A673 (cell line): ENCODE measurements at regions of chr14 and their contacts with region 1.

Region 1: GRCh38 chr14:49173765-49174373 is 412.3 kb downstream of the RPS29 start:
- DNase-seq: peak; percentile 86
- H3K4me3 ChIP-seq: no peak overlapping the region
- H3K27ac ChIP-seq: no peak overlapping the region
- H3K4me1 ChIP-seq: no peaks in the 10 kb centered on the region
- H3K27me3 ChIP-seq: peaks cover 9% of the 10 kb centered on the region
- CTCF ChIP-seq: peak; percentile 83

Region 2: DNA sequence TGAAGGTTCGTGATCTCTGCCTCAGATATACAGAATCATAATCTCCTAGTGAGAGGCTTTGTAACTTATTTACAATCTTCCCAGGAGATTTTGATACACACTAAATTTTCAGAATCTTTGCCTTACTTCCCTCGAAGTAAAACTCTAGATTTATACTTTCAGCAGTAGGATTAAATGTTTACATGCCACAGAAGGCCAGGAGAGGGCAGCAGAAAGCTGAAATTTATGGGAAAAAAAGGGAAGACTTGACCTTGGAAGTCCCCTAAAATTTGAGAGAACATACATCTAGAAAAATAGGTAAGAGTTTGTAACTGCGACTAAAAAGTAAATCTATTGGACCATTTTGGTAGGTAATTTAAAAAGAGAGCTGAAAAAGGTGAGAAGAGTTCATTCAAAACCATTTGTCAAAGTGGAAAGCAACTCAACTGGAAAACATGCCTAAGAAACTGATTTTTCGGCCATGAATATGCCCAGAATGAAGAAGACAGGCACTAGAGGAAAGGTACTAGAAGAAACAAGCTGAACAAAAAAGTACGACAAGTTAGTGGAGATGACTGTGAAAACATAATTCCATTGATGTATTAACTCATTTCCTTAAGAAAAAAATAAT is 1256.4 kb before region 1 on chr14:
- CTCF ChIA-PET with region 1: no interaction called
- POLR2A ChIA-PET with region 1: no interaction called
- intact Hi-C with region 1: loop called (anchors 2 kb)
- DNase-seq: peak; percentile 58
- H3K4me3 ChIP-seq: no peak overlapping the region
- H3K27ac ChIP-seq: no peak overlapping the region
- H3K4me1 ChIP-seq: no peaks in the 10 kb centered on the region
- H3K27me3 ChIP-seq: no peaks in the 10 kb centered on the region
- CTCF ChIP-seq: peak; percentile 70

Region 3: DNA sequence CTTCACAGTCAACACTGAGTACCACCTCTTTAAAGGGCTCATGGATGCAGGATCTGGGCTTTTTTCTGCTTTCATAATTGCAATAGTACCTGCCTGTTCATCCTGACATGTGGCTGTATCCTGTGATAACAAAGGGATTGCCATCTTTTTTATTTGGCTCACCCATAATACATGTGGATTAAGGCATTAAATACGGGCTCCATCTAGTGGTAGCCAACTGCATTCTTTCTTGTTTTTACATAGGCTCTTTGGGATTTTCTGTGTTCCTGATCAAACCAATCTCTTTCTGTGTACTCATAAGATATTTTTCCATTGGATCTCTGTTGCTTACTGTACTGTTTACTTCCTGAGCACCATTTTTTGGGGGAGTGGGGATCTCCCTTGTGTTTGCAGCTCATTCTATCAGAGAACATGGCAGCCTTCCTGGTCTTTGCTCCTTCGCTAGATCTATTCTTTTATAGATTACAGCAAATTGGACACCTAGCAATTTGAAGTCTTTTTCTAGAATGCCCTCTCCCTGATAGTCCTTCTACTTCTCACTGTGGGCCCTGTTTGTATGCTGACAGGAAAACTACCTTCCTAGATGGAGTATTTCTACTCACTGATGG is 775.1 kb before region 1 on chr14:
- CTCF ChIA-PET with region 1: no interaction called
- POLR2A ChIA-PET with region 1: no interaction called
- intact Hi-C with region 1: loop called (anchors 10 kb)
- DNase-seq: peak; percentile 62
- H3K4me3 ChIP-seq: no peak overlapping the region
- H3K27ac ChIP-seq: no peak overlapping the region
- H3K4me1 ChIP-seq: no peaks in the 10 kb centered on the region
- H3K27me3 ChIP-seq: no peaks in the 10 kb centered on the region
- CTCF ChIP-seq: peak; percentile 78

Region 4: GRCh38 chr14:48473944-48474343 is 699.9 kb before region 1 on chr14:
- CTCF ChIA-PET with region 1: interaction called, 11 read pairs
- POLR2A ChIA-PET with region 1: no interaction called
- intact Hi-C with region 1: no loop called
- DNase-seq: no peak
- H3K4me3 ChIP-seq: no peak overlapping the region
- H3K27ac ChIP-seq: no peak overlapping the region
- H3K4me1 ChIP-seq: no peaks in the 10 kb centered on the region
- H3K27me3 ChIP-seq: no peaks in the 10 kb centered on the region
- CTCF ChIP-seq: no peak

Region 5: GRCh38 chr14:48826058-48826457 is 347.8 kb before region 1 on chr14:
- CTCF ChIA-PET with region 1: no interaction called
- POLR2A ChIA-PET with region 1: no interaction called
- intact Hi-C with region 1: loop called (anchors 5 kb)
- DNase-seq: no peak
- H3K4me3 ChIP-seq: no peak overlapping the region
- H3K27ac ChIP-seq: no peak overlapping the region
- H3K4me1 ChIP-seq: no peaks in the 10 kb centered on the region
- H3K27me3 ChIP-seq: no peaks in the 10 kb centered on the region
- CTCF ChIP-seq: no peak